Ovary (tissue), 10 donors: ENCODE measurements at regions of chr11 and their contacts with region 1.

Region 1: DNA sequence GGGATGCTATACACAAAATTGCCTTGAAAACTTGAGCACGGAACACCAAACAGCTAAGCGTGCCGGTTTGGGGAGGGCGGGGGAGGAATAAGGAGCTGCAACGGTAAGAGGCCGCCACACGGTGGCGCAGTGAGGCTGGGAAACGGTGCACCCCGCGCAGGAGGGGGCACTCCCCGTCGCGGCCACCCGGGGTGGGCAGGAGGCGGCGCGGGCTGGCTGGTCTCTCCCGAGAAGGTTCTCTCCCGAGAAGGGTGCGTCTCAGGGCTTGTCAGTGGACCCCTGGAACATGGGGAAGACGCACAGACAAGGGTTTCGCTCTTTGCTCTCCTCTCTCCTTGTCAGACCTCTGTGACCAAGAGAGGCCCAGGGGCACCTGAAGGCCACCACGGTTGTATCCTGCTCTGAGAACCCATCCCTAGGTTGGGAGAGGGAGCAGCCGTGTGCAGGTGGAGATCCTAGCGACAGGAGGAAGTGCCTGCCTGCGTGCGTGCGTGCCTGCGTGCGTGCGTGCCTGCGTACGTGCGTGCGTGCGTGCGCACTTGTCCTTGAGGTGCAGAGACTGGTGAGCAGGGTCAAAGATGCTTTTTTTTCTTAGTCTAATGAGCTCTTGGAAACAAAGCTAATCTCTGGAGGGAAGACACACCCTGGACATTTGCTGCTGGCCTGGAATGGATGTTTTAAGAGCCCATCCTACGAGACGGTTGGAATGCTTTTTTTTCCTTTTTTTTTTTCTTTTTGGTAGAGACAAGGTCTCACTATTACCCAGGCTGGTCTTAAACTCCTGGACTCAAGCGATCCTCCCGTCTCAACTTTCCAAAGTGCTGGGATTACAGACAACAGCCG is 18.1 kb upstream of the JAM3 start:
- DNase-seq: peak; percentile 80 to 91 (median 88)
- H3K4me3 ChIP-seq: no peak overlapping the region
- H3K27ac ChIP-seq: peak overlapping the region; percentile 71 to 91
- H3K4me1 ChIP-seq: peaks cover 5% of the 10 kb centered on the region
- H3K27me3 ChIP-seq: no peaks in the 10 kb centered on the region
- CTCF ChIP-seq: peak; percentile 93 to 98 (median 97)
- EP300 ChIP-seq: no peak
- POLR2A ChIP-seq: peak; percentile 13

Region 2: GRCh38 chr11:133956650-133957633 is 93.8 kb before region 1 on chr11 and contains the start of gene IGSF9B:
- intact Hi-C with region 1: loop called in 1 of 4 experiments (anchors 5 kb)
- DNase-seq: peak; percentile 80 to 92 (median 83)
- H3K4me3 ChIP-seq: peak within 1 kb of the TSS; percentile 63
- H3K27ac ChIP-seq: peak within 1 kb of the TSS in 1 of 2 donors; percentile 54
- H3K4me1 ChIP-seq: no peaks in the 10 kb centered on the region
- H3K27me3 ChIP-seq: no peaks in the 10 kb centered on the region
- CTCF ChIP-seq: peak in 1 of 3 donors; percentile 12
- EP300 ChIP-seq: no peak
- POLR2A ChIP-seq: no peak
- total RNA-seq, gene IGSF9B: 0.48 to 15.4 (median 8.8) TPM

Region 3: GRCh38 chr11:134014511-134014910 is 36.3 kb before region 1 on chr11:
- intact Hi-C with region 1: no loop called
- DNase-seq: no peak
- H3K4me3 ChIP-seq: no peak overlapping the region
- H3K27ac ChIP-seq: no peak overlapping the region
- H3K4me1 ChIP-seq: no peaks in the 10 kb centered on the region
- H3K27me3 ChIP-seq: no peaks in the 10 kb centered on the region
- CTCF ChIP-seq: no peak
- EP300 ChIP-seq: no peak
- POLR2A ChIP-seq: no peak

Region 4: DNA sequence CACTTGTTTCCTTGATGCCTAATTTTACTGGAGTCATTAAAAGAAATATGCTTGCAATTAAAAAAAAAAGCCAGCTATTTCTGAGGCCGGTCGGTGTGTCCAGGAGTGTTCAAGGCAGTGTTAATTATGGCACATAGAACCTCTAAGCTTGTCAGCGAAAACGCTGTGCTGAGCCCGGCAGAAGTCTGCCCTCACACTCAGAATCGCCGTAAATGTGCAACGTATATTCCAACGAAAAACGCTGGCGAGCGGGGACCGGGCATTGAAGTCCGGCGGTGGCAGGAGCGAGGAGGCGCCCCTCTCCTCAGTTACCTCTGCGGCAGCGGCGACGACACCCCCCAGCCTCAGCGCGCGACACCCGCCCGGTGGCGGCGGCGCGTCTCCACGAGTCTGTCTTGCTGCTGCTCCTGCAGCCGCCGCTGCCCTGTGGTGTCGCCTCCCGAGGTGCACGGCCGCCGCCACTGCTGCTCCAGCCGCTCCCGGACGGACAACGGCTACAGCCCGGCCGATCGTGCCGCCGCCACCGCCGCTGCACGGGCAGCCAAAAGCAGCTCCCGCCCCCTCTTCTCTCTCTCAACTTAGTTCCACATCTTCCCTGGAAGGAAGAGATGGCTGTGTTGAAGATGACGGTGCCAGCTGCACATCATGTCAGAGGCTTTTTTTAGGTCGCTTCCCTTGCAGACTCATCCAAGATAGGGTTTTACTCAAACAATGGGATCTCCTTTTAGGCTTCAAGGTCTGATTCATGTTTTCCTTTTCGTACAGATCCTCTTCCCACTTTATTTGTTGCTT is 74.1 kb after region 1 on chr11:
- intact Hi-C with region 1: loop called in 2 of 4 experiments (anchors 5 kb)
- DNase-seq: peak in 4 of 5 donors; percentile 29 to 57 (median 45)
- H3K4me3 ChIP-seq: peak overlapping the region; percentile 40
- H3K27ac ChIP-seq: no peak overlapping the region
- H3K4me1 ChIP-seq: peaks cover 6% of the 10 kb centered on the region
- H3K27me3 ChIP-seq: no peaks in the 10 kb centered on the region
- CTCF ChIP-seq: no peak
- EP300 ChIP-seq: no peak
- POLR2A ChIP-seq: no peak

Region 5: DNA sequence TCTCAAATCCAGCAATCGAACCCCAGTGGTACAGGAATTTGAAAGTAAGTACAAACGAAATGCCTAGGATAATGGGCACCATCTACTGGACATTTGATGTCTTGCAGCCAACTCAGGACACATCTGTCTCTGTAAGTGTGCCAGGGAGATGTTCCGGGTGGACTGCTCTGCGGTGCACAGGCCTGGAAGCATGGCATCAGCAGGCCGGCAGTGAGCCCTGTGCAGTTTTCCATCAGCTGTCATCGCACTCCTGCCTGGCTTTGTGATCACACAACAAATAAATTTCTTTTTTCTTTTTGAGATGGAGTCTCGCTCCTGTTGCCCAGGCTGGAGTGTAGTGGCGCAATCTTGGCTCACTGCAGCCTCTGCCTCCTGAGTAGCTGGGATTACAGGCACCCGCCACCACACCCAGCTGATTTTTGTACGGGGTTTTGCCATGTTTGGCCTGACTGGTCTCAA is 89.1 kb after region 1 on chr11:
- intact Hi-C with region 1: loop called (anchors 2 to 5 kb)
- DNase-seq: peak; percentile 61 to 84 (median 62)
- H3K4me3 ChIP-seq: no peak overlapping the region
- H3K27ac ChIP-seq: peak overlapping the region in 1 of 2 donors; percentile 69
- H3K4me1 ChIP-seq: peaks cover 2% of the 10 kb centered on the region
- H3K27me3 ChIP-seq: no peaks in the 10 kb centered on the region
- CTCF ChIP-seq: peak; percentile 77 to 94 (median 92)
- EP300 ChIP-seq: no peak
- POLR2A ChIP-seq: no peak